HepG2 (cell line): ENCODE measurements at regions of chr6 and their contacts with region 1.

Region 1: DNA sequence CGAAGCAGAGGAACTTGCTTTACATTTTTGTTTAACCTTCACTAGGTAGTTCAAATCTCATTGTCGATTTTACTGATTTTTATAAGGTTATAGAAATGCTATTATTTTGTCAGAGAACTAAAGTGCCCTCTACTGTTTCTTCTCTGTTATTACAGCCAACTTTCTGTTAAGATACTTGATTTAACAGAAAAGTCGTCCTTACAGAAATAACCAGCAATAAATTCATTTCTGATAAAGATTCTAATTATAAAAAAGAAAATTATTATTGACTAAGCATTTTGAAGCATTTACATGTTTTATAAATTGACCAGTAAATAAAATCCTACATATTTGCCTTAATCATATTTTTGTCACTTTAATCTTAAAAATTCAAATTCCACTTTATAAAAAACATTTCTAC is 60.8 kb downstream of the OGFRL1 start:
- DNase-seq: peak; percentile 2
- ATAC-seq: no peak
- H3K4me3 ChIP-seq: no peak overlapping the region
- H3K27ac ChIP-seq: no peak overlapping the region
- H3K4me1 ChIP-seq: no peaks in the 10 kb centered on the region
- H3K27me3 ChIP-seq: no peaks in the 10 kb centered on the region
- CTCF ChIP-seq: peak; percentile 37; the same call in 1 of the 2 replicates
- EP300 ChIP-seq: no peak
- POLR2A ChIP-seq: no peak
- RAD21 ChIP-seq: no peak

Region 2: DNA sequence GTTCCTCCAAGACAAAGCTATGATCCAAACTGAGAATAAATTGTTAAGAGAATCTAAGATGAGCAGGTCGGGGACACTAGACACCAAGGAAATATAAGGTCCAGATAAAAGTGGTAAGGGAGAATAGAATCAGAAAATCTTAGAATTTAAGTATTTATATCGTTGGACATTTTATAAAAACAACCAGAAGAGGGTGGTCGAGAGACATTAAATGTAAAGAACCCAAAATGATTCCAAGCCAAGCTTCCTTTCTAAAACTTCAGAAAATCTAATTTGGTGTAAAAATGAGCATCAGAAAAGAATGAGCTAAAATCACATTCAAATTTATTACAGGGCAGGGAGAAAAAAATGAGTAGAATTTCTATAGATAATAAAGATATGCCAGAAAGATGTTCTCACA is 158.6 kb before region 1 on chr6:
- CTCF ChIA-PET with region 1: interaction called, 7 read pairs
- POLR2A ChIA-PET with region 1: no interaction called
- in situ Hi-C with region 1: loop called (anchors 5 kb)
- intact Hi-C with region 1: loop called (anchors 1 kb)
- DNase-seq: peak; percentile 11
- ATAC-seq: no peak
- H3K4me3 ChIP-seq: no peak overlapping the region
- H3K27ac ChIP-seq: no peak overlapping the region
- H3K4me1 ChIP-seq: no peaks in the 10 kb centered on the region
- H3K27me3 ChIP-seq: no peaks in the 10 kb centered on the region
- CTCF ChIP-seq: no peak
- EP300 ChIP-seq: no peak
- POLR2A ChIP-seq: no peak
- RAD21 ChIP-seq: no peak

Region 3: DNA sequence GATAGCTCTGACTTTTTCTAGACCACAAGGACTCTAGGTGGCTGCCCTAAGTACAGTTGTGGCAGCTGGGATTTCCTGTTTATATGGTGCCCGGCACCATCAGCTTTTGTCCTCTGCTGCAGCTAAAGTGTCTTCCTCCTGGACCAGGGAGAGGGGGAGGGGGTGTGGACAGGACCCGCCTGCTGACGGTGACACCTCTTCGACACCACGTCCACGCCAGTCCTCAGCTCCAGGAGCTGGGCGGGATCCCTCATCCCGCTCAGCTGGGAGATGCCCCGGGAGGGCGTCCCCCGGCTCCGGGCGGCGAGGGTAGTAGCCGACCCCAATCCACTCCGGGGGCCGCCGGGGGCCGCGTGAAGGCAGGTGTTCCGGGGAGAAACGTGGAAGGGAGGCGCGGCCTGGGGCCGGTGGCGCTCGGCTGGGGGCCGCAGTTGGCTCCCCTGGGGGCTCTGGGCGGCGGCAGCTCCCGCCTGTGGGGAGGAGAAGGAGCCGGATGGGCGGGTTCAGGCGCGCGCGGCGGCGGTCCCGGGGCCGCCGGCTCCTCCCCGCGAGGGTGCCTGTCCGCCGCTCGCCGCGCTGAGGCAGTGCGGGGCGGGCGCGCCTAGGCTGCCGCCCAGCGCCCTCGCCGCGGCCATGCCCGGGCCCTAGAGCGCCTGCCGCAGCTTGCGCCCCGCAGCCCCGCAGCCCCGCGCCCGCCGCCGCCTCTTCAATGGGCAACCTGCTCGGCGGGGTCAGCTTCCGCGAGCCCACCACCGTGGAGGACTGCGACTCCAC is 61.0 kb before region 1 on chr6 and contains the start of gene OGFRL1:
- CTCF ChIA-PET with region 1: no interaction called
- POLR2A ChIA-PET with region 1: no interaction called
- in situ Hi-C with region 1: no loop called
- intact Hi-C with region 1: loop called (anchors 2 kb)
- DNase-seq: peak; percentile 14
- ATAC-seq: peak; percentile 99
- H3K4me3 ChIP-seq: peak within 1 kb of the TSS; percentile 60 to 76 (median 62)
- H3K27ac ChIP-seq: no peak within 1 kb of the TSS
- H3K4me1 ChIP-seq: peaks cover 15% of the 10 kb centered on the region
- H3K27me3 ChIP-seq: peaks cover 0 to 11% of the 10 kb centered on the region in 2 experiments; a peak in 2 of 5 replicates
- CTCF ChIP-seq: peak; percentile 18; the same call in 1 of the 2 replicates
- EP300 ChIP-seq: no peak
- POLR2A ChIP-seq: no peak
- RAD21 ChIP-seq: no peak
- total RNA-seq, gene OGFRL1: 0.80 and 0.88 TPM in 2 replicates

Region 4: DNA sequence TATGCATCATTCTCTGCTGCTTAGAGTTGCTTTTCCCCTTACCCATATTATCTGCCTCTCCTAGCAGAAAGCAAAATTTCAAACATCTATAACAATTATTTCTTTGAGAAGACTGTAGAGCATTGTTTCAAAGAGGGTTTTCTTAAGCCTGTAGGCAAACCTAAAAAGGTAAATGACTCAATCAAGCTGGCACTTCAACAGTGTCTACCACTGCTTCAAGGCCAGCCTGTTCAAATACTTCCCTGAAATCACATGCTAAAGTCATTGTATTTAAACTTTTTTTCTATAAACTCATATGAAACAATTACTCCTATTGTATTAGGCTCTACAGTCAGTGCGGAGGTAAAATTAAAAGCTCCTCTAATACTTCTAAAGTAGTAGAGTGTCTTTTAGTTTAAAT is 26.3 kb after region 1 on chr6:
- CTCF ChIA-PET with region 1: no interaction called
- POLR2A ChIA-PET with region 1: no interaction called
- in situ Hi-C with region 1: no loop called
- intact Hi-C with region 1: no loop called
- DNase-seq: peak; percentile 39
- ATAC-seq: no peak
- H3K4me3 ChIP-seq: no peak overlapping the region
- H3K27ac ChIP-seq: no peak overlapping the region
- H3K4me1 ChIP-seq: 0 out of 2 replicates have a peak, but pooled peaks cover 5% of the 10 kb centered on the region
- H3K27me3 ChIP-seq: no peaks in the 10 kb centered on the region
- CTCF ChIP-seq: no peak
- EP300 ChIP-seq: no peak
- POLR2A ChIP-seq: no peak
- RAD21 ChIP-seq: no peak